ENCODE measurements at regions of chr6 and their contacts with region 1.

Region 1: GRCh38 chr6:165884813-165885765 is 222.0 kb upstream of the PDE10A start:
- DNase-seq: peak; percentile 92
- H3K4me3 ChIP-seq: no peak overlapping the region
- H3K27ac ChIP-seq: peak overlapping the region in 1 of 4 donors; percentile 51
- H3K4me1 ChIP-seq: peaks cover 0 to 24% (median 9%) of the 10 kb centered on the region in 4 donors
- H3K27me3 ChIP-seq: no peaks in the 10 kb centered on the region
- CTCF ChIP-seq: peak; percentile 79 to 95 (median 90)
- EP300 ChIP-seq: no peak
- POLR2A ChIP-seq: no peak

Region 2: GRCh38 chr6:165701564-165702354 is 183.3 kb before region 1 on chr6:
- intact Hi-C with region 1: no loop called
- DNase-seq: no peak
- H3K4me3 ChIP-seq: no peak overlapping the region
- H3K27ac ChIP-seq: no peak overlapping the region
- H3K4me1 ChIP-seq: peaks cover 0 to 19% (median 11%) of the 10 kb centered on the region in 4 donors
- H3K27me3 ChIP-seq: no peaks in the 10 kb centered on the region
- CTCF ChIP-seq: no peak
- EP300 ChIP-seq: no peak
- POLR2A ChIP-seq: no peak

Region 3: GRCh38 chr6:166097915-166098522 is 212.9 kb after region 1 on chr6:
- intact Hi-C with region 1: loop called (anchors 1 kb)
- DNase-seq: peak; percentile 88
- H3K4me3 ChIP-seq: peak overlapping the region in 3 of 4 donors; percentile 39 to 47 (median 45)
- H3K27ac ChIP-seq: peak overlapping the region in 3 of 4 donors; percentile 35 to 65 (median 39)
- H3K4me1 ChIP-seq: no peaks in the 10 kb centered on the region
- H3K27me3 ChIP-seq: no peaks in the 10 kb centered on the region
- CTCF ChIP-seq: peak; percentile 76 to 92 (median 81)
- EP300 ChIP-seq: no peak
- POLR2A ChIP-seq: no peak